ENCODE measurements at regions of chr11 and their contacts with region 1.

Region 1: GRCh38 chr11:130131961-130132850 is 27.4 kb upstream of the ST14 start:
- DNase-seq: peak; percentile 83
- H3K4me3 ChIP-seq: no peak overlapping the region
- H3K27ac ChIP-seq: no peak overlapping the region
- H3K4me1 ChIP-seq: no peaks in the 10 kb centered on the region
- H3K27me3 ChIP-seq: no peaks in the 10 kb centered on the region
- CTCF ChIP-seq: peak; percentile 67 to 84
- POLR2A ChIP-seq: no peak

Region 2: DNA sequence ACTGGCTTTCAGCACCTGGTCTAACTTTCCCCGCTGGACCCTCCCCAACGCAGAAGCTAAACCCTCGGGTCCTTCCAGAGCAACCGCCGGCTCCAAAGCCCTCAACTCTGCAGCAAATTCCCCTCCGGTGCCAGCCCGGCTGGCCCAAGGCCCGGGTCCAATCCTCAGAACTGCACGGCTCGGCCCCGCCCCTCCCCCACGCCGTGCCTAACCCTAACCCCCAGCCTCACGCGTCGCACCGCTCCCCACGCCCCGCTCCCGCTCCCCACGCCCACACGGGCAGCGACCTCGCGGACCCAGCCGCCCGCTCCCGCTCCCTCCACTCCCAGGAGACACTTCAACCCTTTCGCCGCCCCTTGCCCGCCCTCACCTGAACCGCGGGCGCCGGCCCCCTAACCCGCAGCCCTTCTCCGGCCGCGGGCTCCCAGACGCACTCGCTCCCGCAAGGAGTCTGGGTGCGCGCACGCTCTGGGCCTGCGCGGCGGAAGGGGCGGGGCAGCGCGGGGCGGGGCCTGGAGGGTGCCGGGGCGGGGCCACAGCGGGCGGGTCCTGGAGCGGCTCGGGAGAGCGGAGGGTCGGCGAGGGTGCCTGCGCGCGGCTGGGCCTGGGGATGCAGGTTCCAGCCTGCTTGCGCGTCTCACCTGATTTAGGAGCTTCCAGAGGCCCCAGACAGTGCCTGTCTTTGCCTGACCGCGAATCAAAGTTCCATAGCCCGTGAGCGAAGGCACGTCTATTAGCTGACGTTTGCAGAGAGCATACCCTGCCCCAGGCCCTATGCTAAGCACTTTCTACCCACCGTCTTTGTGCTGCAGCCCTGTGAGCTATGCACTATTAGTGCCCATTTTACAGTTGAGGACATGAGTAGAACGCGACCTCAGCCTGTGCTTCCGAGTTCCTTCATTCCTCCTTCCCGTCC is 236.8 kb before region 1 on chr11 and contains the start of gene NFRKB:
- CTCF ChIA-PET with region 1: interaction called, 26 read pairs
- POLR2A ChIA-PET with region 1: no interaction called
- dilution Hi-C with region 1: no loop called
- intact Hi-C with region 1: loop called (anchors 1 kb)
- DNase-seq: peak; percentile 84
- H3K4me3 ChIP-seq: peak within 1 kb of the TSS; percentile 72 to 95 (median 93)
- H3K27ac ChIP-seq: no peak within 1 kb of the TSS
- H3K4me1 ChIP-seq: peaks cover 9% of the 10 kb centered on the region
- H3K27me3 ChIP-seq: no peaks in the 10 kb centered on the region
- CTCF ChIP-seq: no peak
- POLR2A ChIP-seq: peak; percentile 83
- total RNA-seq, gene NFRKB: 30.1 and 30.6 TPM in 2 replicates

Region 3: GRCh38 chr11:129930296-129930695 is 201.9 kb before region 1 on chr11:
- CTCF ChIA-PET with region 1: interaction called, 399 read pairs
- POLR2A ChIA-PET with region 1: interaction called, 7 read pairs
- dilution Hi-C with region 1: no loop called
- intact Hi-C with region 1: no loop called
- DNase-seq: peak; percentile 8
- H3K4me3 ChIP-seq: no peak overlapping the region
- H3K27ac ChIP-seq: no peak overlapping the region
- H3K4me1 ChIP-seq: no peaks in the 10 kb centered on the region
- H3K27me3 ChIP-seq: no peaks in the 10 kb centered on the region
- CTCF ChIP-seq: no peak
- POLR2A ChIP-seq: no peak

Region 4: GRCh38 chr11:129992161-129992944 is 139.9 kb before region 1 on chr11:
- CTCF ChIA-PET with region 1: interaction called, 74 read pairs
- POLR2A ChIA-PET with region 1: no interaction called
- dilution Hi-C with region 1: no loop called
- intact Hi-C with region 1: loop called (anchors 1 kb)
- DNase-seq: peak; percentile 31
- H3K4me3 ChIP-seq: no peak overlapping the region
- H3K27ac ChIP-seq: no peak overlapping the region
- H3K4me1 ChIP-seq: peaks cover 5% of the 10 kb centered on the region
- H3K27me3 ChIP-seq: no peaks in the 10 kb centered on the region
- CTCF ChIP-seq: peak in 1 of 2 donors; percentile 35
- POLR2A ChIP-seq: no peak

Region 5: DNA sequence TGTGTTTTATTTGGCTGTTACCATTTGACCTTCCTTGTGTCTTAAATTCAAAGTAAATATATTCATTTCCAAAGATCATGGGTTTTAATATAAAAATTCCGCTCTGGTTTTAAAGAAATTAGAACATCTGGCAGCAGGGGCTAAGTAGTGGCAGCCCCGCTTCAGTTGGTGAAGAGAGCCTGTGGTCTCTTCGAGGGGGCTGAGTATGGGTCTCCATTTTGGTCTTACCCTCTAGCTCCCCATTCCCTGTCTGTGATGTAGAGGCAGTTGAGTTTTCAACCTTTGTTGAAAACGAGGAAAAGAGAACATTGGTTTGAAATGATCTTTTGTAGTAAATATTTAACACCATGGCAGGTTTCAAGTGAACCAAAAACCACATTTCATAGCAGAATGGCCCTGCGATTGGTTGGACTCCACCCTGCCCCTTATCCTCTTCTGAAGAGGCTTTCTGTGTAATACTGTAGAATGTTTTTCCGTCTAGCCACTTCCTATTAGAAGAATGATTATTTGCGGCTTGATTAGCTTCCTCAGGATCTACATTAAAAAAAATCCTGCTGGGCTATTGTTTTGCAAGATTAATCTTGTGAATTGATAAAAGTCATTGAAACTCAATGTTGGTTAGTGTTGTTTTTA is 44.8 kb before region 1 on chr11:
- CTCF ChIA-PET with region 1: interaction called, 13 read pairs
- POLR2A ChIA-PET with region 1: no interaction called
- dilution Hi-C with region 1: no loop called
- intact Hi-C with region 1: no loop called
- DNase-seq: no peak
- H3K4me3 ChIP-seq: no peak overlapping the region
- H3K27ac ChIP-seq: no peak overlapping the region
- H3K4me1 ChIP-seq: peaks cover 27% of the 10 kb centered on the region
- H3K27me3 ChIP-seq: no peaks in the 10 kb centered on the region
- CTCF ChIP-seq: no peak
- POLR2A ChIP-seq: no peak

Region 6: DNA sequence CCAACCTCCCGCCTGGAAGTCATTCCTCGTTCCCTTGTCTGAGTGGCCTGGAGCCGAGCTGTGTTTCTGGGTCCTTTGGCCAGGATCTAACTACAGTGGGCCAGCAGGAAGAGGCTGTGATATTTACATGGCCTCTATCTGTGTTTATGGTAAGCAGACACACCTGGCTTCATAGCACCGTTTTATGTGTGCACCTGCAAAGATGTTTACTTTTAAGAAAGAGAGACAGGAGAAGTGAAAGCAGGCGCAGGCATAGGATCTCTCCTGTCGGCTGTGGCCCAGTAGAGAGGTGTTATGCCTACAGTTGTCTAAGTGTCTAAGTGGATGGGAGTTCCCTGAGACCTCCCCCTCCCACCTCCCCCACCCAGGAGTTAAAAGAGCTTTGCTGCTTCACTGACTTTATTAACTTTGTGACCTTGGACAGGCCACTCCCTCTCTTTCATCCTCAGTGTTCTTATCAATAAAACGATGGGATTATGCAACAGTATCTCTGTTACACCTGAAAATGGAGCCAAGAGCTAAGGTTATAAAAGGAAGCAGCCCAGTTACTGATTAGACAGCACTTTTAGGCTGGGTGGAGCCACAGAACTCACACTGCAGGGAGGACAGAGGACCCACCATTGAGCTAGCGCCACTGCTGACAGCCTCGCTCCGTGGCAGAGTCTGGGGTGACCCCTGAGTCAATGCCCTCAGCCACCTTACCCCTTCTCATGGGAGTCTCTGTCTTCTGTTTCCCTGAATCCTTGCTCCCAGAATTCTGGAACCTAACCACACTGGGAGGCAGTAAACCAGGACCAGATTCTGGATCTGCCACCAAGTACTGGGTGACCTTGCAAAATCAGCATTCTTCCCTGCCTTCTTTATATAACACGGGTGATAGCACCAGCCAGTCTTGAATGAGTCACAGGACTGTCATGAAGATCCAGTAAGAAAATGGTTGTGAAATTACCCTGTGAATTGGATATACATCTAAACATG is 49.4 kb after region 1 on chr11:
- CTCF ChIA-PET with region 1: no interaction called
- POLR2A ChIA-PET with region 1: no interaction called
- dilution Hi-C with region 1: no loop called
- intact Hi-C with region 1: no loop called
- DNase-seq: no peak
- H3K4me3 ChIP-seq: no peak overlapping the region
- H3K27ac ChIP-seq: no peak overlapping the region
- H3K4me1 ChIP-seq: no peaks in the 10 kb centered on the region
- H3K27me3 ChIP-seq: no peaks in the 10 kb centered on the region
- CTCF ChIP-seq: no peak
- POLR2A ChIP-seq: no peak

Region 7: GRCh38 chr11:130300567-130300966 is 168.4 kb after region 1 on chr11:
- CTCF ChIA-PET with region 1: no interaction called
- POLR2A ChIA-PET with region 1: no interaction called
- dilution Hi-C with region 1: no loop called
- intact Hi-C with region 1: no loop called
- DNase-seq: no peak
- H3K4me3 ChIP-seq: no peak overlapping the region
- H3K27ac ChIP-seq: no peak overlapping the region
- H3K4me1 ChIP-seq: no peaks in the 10 kb centered on the region
- H3K27me3 ChIP-seq: no peaks in the 10 kb centered on the region
- CTCF ChIP-seq: no peak
- POLR2A ChIP-seq: no peak